Ovary (tissue), 10 donors: ENCODE measurements at regions of chr7 and their contacts with region 1.

Region 1: GRCh38 chr7:4631664-4632171 is 50.4 kb upstream of the FOXK1 start:
- DNase-seq: peak; percentile 81 to 88 (median 84)
- H3K4me3 ChIP-seq: peak overlapping the region; percentile 16
- H3K27ac ChIP-seq: peak overlapping the region in 1 of 2 donors; percentile 28
- H3K4me1 ChIP-seq: no peaks in the 10 kb centered on the region
- H3K27me3 ChIP-seq: no peaks in the 10 kb centered on the region
- CTCF ChIP-seq: peak; percentile 43 to 77 (median 71)
- EP300 ChIP-seq: peak; percentile 62
- POLR2A ChIP-seq: no peak

Region 2: DNA sequence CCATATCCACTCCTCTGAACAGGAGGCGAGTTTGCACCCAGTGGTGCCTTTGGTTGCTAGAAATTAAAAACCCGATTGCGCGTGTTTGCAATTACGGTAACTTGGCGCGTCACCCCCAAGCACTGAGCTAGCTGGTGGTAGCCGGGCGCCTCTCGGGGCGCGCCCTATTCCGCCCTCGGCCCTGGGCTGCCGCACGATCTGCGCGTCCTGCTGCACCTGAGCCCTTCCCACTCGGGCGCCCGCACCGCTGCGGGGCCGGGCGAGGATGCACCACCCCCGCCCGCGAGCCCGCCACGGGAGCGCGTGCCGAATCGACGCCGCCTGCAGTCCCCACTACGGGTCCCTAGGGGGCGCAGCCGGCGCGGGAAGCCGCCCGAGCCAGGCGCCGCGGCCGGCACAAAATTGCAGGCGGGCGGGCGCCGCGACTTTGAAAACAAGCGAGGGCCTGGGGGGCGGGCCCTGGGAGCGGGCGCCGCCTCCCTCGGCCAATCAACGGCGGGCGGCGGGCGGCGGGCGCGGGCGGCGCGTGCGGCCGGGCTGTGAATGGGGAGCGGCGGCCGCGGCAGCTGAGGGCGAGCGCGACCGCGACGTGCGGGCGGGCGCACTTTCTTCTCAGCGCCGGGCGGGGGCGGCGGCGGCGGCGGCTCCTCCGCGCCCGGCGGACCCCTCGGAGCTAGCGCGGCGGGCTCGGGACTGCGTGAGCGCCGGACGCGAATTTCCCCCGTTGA is 1330.9 kb before region 1 on chr7 and contains the start of gene SDK1:
- intact Hi-C with region 1: loop called in 1 of 4 experiments (anchors 5 kb)
- DNase-seq: peak; percentile 86 to 95 (median 94)
- H3K4me3 ChIP-seq: peak within 1 kb of the TSS; percentile 61
- H3K27ac ChIP-seq: peak within 1 kb of the TSS in 1 of 2 donors; percentile 57
- H3K4me1 ChIP-seq: peaks cover 3% of the 10 kb centered on the region
- H3K27me3 ChIP-seq: no peaks in the 10 kb centered on the region
- CTCF ChIP-seq: peak; percentile 88 to 98 (median 93)
- EP300 ChIP-seq: no peak
- POLR2A ChIP-seq: no peak
- total RNA-seq, gene SDK1: 2.3 to 13.3 (median 4.5) TPM

Region 3: DNA sequence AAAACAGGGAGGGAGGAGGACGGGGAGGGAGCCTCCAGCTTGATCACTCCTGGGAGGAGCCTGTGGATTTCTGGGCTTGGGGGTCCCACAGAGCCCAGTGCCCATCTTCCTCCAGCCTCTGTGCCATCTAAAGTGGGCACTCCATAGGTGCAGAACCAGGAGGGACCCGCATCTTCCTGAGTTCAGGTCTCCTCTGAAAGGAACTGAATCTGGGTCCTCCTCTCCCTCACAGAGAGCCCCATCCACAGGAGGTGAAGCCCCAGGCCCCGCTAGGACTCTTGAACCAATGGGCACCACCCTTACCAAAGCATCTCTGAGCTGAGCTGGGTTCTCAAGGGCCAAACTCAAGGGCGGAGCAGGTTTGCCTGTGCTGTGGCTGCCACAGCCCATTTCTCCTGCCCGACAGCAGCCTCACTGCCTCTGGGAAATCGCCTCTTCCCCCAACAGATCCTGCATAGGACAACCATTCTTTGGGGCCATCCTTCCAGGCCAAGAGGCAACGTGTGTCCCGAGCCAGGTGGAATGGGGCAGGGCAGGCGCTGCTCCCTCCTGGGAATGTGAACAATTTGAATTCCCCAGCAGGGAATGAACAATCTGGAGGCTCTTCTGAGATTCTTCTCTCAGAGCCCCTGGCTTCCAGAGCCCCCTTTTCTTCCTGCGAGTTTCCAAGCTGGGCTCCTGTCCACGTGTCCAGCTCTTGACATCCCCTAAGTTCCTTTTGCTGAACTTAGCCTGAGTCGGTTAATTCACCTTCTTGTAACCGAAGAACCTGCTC is 360.6 kb before region 1 on chr7:
- intact Hi-C with region 1: no loop called
- DNase-seq: no peak
- H3K4me3 ChIP-seq: no peak overlapping the region
- H3K27ac ChIP-seq: no peak overlapping the region
- H3K4me1 ChIP-seq: no peaks in the 10 kb centered on the region
- H3K27me3 ChIP-seq: no peaks in the 10 kb centered on the region
- CTCF ChIP-seq: no peak
- EP300 ChIP-seq: no peak
- POLR2A ChIP-seq: no peak

Region 4: DNA sequence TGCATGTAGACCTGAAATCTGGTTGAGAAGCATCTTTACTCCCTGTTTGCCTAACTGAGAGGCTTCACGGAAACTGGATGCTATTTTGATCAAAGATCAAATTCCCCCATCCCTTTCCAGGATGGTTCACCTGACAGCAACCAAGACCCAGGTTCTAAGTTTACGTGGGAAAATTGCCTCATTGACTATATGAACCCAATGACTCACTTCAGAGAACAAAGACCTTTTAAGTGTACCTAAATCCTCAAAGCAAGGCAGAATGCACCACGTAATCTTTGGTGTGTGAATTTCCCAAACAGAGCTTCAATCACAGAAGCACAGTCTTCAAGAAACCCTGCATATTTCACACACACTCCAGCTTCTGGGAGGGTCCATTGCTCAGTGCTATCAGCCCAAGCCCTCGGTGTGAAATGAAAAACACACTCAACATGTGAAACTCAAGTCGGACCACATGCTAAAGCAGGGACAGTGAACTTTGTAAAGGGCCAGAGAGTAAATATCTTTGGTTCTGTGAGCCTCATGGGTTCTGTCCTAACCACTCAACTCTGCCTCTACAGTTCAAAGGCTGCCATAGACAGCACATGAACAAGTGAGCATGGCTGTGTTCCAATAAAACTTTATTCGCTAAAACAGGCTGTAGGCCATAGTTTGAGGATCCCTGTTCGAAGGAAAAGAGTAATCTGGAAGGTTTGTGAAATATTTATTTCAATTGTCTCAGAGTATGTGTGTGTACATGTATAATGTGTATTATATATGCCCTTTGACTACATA is 225.2 kb before region 1 on chr7:
- intact Hi-C with region 1: no loop called
- DNase-seq: no peak
- H3K4me3 ChIP-seq: no peak overlapping the region
- H3K27ac ChIP-seq: no peak overlapping the region
- H3K4me1 ChIP-seq: no peaks in the 10 kb centered on the region
- H3K27me3 ChIP-seq: no peaks in the 10 kb centered on the region
- CTCF ChIP-seq: no peak
- EP300 ChIP-seq: no peak
- POLR2A ChIP-seq: no peak

Region 5: GRCh38 chr7:4765776-4766490 is 134.2 kb after region 1 on chr7:
- intact Hi-C with region 1: no loop called
- DNase-seq: no peak
- H3K4me3 ChIP-seq: peak overlapping the region; percentile 21
- H3K27ac ChIP-seq: no peak overlapping the region
- H3K4me1 ChIP-seq: no peaks in the 10 kb centered on the region
- H3K27me3 ChIP-seq: no peaks in the 10 kb centered on the region
- CTCF ChIP-seq: no peak
- EP300 ChIP-seq: no peak
- POLR2A ChIP-seq: no peak

Region 6: DNA sequence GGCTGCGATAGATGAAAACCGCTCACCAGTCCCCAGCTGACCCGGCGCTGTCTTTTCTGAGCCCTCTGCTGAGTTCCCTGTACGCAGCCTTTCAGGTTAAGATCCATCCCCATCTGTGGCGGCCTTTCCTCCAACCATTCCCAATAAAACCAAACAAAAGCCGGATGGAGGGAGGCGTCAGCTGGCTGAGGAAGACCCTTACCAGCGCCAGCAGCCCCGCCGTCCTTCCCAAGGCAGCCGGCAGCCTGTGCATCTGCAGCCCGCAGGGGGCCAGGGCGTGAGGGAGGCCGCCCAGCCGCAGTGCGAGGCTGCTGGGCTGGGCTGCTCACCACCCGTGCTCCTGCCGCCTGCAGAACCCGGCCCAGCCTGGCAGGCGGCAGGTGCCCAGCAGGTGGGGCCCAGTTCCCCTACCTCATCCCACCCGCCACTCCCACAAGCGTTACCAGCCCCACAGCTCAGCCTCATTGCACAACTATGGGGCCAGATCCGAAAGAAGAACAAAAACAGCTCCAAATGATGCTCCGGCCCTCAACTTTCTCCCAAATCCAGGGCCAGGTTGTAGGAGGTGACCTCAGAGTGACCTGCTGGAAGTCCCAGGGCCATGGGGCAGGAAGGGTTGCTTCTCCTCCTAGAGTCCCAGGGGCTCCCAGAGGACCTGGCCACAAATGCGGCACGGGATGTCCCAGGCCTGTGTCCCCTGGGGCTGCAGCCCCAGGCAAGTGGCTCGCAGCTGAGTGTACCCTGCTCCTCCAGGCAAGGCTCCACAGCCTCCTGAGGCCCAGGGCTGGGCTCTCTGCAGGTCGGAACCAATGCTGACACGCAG is 206.3 kb after region 1 on chr7:
- intact Hi-C with region 1: no loop called
- DNase-seq: no peak
- H3K4me3 ChIP-seq: no peak overlapping the region
- H3K27ac ChIP-seq: no peak overlapping the region
- H3K4me1 ChIP-seq: peaks cover 1% of the 10 kb centered on the region
- H3K27me3 ChIP-seq: no peaks in the 10 kb centered on the region
- CTCF ChIP-seq: no peak
- EP300 ChIP-seq: no peak
- POLR2A ChIP-seq: no peak